Panc1 (cell line): ENCODE measurements at regions of chr2 and their contacts with region 1.

Region 1: GRCh38 chr2:42196403-42197267 is 27.5 kb downstream of the EML4 start:
- DNase-seq: no peak
- ATAC-seq: peak; percentile 57
- H3K4me3 ChIP-seq: no peak overlapping the region
- H3K27ac ChIP-seq: peak overlapping the region; percentile 26; the same call in 1 of the 2 replicates
- H3K4me1 ChIP-seq: peaks cover 44% of the 10 kb centered on the region
- H3K27me3 ChIP-seq: no peaks in the 10 kb centered on the region
- CTCF ChIP-seq: peak; percentile 61

Region 2: DNA sequence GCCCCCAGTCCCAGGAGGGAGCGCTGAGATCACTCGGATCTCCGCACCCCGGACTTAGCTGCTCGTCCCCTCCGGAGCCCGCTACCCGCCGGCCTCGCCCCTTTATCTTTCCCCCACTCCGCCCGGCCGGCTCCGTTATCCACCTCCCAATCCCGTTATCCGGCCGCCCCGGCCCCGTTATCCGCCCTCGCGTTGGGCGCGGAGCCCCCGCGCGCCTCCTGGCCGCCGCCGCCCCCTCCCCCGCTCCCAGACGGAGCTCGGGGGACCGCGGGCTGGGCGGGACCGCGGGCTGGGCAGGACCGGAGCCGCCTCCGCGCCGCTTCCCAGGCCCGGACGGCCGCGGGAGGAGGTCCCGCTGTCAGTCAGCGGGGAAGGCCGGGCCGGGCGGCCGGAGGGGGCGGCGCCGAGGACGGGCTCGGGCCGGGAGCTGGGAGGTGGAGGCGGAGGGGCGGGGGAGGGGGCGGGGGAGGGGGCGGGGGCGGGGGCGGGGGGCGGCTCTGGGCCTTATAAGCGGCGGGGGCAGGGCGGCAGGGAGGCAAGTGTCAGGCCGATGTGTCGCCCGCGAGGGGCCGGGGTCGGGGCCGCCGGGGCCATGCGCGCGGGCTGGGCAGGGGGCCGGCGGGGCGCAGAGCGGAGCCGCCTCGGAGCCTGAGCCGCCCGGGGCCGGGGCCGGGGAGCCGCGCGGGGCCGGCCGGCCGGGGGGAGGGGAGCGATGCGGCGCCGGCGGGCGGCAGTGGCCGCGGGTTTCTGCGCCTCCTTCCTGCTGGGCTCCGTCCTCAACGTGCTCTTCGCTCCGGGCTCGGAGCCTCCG is 148.9 kb before region 1 on chr2 and contains the start of gene PKDCC:
- CTCF ChIA-PET with region 1: no interaction called
- POLR2A ChIA-PET with region 1: no interaction called
- in situ Hi-C with region 1: no loop called
- intact Hi-C with region 1: no loop called
- DNase-seq: no peak
- ATAC-seq: peak; percentile 87
- H3K4me3 ChIP-seq: peak within 1 kb of the TSS; percentile 62 to 64
- H3K27ac ChIP-seq: peak within 1 kb of the TSS; percentile 51
- H3K4me1 ChIP-seq: peaks cover 36% of the 10 kb centered on the region
- H3K27me3 ChIP-seq: no peaks in the 10 kb centered on the region
- CTCF ChIP-seq: no peak
- total RNA-seq, gene PKDCC: 14.8 TPM

Region 3: DNA sequence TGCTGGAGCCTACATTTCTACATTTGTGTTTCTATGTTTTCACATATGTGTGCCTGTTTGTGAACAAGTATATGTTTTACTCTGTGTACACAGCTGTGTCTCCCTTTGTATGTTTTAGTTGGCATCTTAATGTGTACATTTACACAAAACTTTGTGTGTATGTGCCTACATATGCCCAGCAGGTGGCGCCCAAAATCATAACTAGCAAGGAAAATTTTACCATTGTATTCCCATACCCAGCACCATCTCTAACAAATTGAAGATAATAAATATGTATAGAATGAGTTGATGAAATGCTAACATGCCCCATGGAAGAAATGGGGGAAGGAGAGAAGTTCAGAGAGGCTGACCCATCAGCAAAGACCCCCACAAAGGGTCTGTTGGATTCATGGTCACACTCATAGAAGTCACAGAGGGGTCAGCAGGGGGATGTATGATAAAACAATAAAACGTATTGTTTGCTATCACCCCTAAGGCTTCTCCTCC is 100.7 kb before region 1 on chr2:
- CTCF ChIA-PET with region 1: no interaction called
- POLR2A ChIA-PET with region 1: no interaction called
- in situ Hi-C with region 1: no loop called
- intact Hi-C with region 1: loop called (anchors 1 kb)
- DNase-seq: peak; percentile 41
- ATAC-seq: peak; percentile 75
- H3K4me3 ChIP-seq: no peak overlapping the region
- H3K27ac ChIP-seq: peak overlapping the region; percentile 75
- H3K4me1 ChIP-seq: peaks cover 41% of the 10 kb centered on the region
- H3K27me3 ChIP-seq: no peaks in the 10 kb centered on the region
- CTCF ChIP-seq: peak; percentile 79

Region 4: DNA sequence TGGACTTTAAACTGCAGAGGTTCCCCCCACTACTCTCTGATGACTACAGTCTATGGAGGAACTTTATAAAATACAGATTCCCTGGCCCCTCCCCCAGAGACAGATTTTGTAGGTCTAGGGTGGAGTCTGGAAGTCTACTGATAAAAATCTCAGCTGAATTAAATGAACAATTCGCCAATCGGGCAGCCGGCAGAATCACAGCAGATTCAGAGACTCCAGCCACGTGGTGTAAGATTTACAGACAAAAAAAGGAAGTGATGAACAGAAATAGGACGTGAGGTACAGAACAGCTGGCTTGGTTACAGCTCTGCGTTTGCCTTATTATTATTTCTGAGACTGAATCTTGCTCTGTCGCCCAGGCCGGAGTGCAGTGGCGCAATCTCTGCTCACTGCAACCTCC is 350.4 kb after region 1 on chr2:
- CTCF ChIA-PET with region 1: no interaction called
- POLR2A ChIA-PET with region 1: no interaction called
- in situ Hi-C with region 1: no loop called
- intact Hi-C with region 1: no loop called
- DNase-seq: no peak
- ATAC-seq: no peak
- H3K4me3 ChIP-seq: no peak overlapping the region
- H3K27ac ChIP-seq: no peak overlapping the region
- H3K4me1 ChIP-seq: no peaks in the 10 kb centered on the region; the same call in 1 of the 2 replicates
- H3K27me3 ChIP-seq: no peaks in the 10 kb centered on the region
- CTCF ChIP-seq: no peak